ENCODE measurements at regions of chr2 and their contacts with region 1.

Region 1: DNA sequence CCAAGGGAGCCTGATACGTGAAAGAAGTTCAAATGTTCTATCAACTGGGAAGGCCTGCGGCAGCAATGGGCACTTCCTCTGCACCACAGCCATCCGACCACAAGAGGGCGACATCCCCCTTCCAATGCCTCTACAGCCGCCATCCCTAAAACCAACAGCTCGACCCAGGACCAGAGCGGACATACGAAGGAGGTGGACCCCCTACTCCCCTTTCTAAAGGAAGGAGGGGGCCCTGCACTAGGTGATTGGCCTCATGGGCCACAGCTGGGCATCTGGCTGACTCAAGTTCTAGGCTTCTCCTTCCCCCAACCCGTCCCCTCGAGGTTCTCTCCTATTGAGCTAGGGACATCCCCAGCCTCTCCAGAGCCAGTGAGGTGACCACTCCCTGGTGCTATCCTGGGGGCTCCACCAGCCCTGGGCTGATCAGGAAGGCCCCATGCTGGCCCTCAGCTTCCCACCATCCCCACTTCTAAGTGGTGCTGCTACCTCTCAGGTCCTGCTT is 217.2 kb downstream of the TNS1 start:
- DNase-seq: peak; percentile 73 to 87 (median 81)
- ATAC-seq: peak; percentile 85
- H3K4me3 ChIP-seq: no peak overlapping the region
- H3K4me1 ChIP-seq: no peaks in the 10 kb centered on the region
- CTCF ChIP-seq: peak; percentile 93

Region 2: GRCh38 chr2:217632043-217632442 is 153.6 kb before region 1 on chr2:
- intact Hi-C with region 1: no loop called
- DNase-seq: peak in 1 of 3 donors; percentile 34
- ATAC-seq: peak; percentile 31
- H3K4me3 ChIP-seq: no peak overlapping the region
- H3K4me1 ChIP-seq: no peaks in the 10 kb centered on the region
- CTCF ChIP-seq: no peak

Region 3: GRCh38 chr2:217886720-217887309 is 101.2 kb after region 1 on chr2:
- intact Hi-C with region 1: loop called in 1 of 2 experiments (anchors 2 kb)
- DNase-seq: peak in 2 of 3 donors; percentile 54 to 74
- ATAC-seq: peak; percentile 72
- H3K4me3 ChIP-seq: no peak overlapping the region
- H3K4me1 ChIP-seq: no peaks in the 10 kb centered on the region
- CTCF ChIP-seq: peak; percentile 29

Region 4: GRCh38 chr2:217993817-217994463 is 208.3 kb after region 1 on chr2:
- intact Hi-C with region 1: loop called (anchors 5 to 10 kb)
- DNase-seq: peak in 2 of 3 donors; percentile 74 to 76
- ATAC-seq: peak; percentile 67
- H3K4me3 ChIP-seq: no peak overlapping the region
- H3K4me1 ChIP-seq: no peaks in the 10 kb centered on the region
- CTCF ChIP-seq: peak; percentile 59

Measured in mucosa of descending colon (tissue), 3 donors.